ENCODE measurements at regions of chr16 and their contacts with region 1.

Region 1: DNA sequence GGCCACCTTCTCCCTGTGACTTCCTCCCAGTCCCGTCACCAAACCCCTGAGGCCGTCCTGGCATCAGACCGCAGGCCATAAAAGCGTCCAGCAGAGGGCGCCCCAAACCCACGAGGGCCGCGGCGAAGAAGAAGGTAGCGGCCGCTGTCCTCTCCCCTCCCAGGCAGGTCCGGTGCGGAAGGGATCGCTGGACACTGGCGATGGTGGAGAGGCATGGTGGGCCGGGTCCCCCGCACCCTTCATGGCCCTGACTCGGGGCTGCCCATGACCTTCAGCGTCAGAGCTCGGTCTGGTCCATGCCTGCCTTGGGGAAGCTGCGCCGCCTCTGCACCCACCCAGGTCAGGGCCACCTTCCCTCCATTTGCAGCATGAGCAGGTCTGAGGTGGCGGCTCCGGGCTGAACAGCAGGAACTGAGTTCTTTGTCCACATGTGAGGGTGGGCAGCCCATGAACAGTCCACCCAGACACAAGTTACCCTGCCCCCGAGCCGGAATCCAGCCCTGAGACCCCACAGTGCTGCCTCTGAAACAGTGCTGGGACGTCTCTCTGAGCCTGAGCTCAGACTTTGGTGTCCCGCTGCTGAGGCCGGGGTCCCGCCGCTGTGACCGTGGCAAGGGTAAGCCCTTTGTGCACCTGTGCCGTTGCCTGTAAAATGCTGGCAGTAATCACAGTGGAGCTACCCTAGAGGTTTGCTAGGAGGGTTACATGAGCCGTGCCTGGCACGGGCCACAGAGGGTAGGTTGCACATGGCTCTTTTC is 40.8 kb upstream of the CMIP start:
- DNase-seq: peak; percentile 89
- ATAC-seq: peak; percentile 95
- H3K4me3 ChIP-seq: peak overlapping the region in 4 of 5 experiments; percentile 16 to 45 (median 35)
- H3K4me3 Mint-ChIP-seq: peak overlapping the region; percentile 40
- H3K27ac ChIP-seq: no peak overlapping the region
- H3K27ac Mint-ChIP-seq: no peak overlapping the region
- H3K4me1 ChIP-seq: peaks cover 0 to 9% of the 10 kb centered on the region in 2 donors
- H3K4me1 Mint-ChIP-seq: peaks cover 4% of the 10 kb centered on the region
- H3K27me3 ChIP-seq: peaks cover 0 to 7% (median 0%) of the 10 kb centered on the region in 4 experiments
- H3K27me3 Mint-ChIP-seq: peaks cover 4% of the 10 kb centered on the region
- CTCF ChIP-seq: peak; percentile 97

Region 2: DNA sequence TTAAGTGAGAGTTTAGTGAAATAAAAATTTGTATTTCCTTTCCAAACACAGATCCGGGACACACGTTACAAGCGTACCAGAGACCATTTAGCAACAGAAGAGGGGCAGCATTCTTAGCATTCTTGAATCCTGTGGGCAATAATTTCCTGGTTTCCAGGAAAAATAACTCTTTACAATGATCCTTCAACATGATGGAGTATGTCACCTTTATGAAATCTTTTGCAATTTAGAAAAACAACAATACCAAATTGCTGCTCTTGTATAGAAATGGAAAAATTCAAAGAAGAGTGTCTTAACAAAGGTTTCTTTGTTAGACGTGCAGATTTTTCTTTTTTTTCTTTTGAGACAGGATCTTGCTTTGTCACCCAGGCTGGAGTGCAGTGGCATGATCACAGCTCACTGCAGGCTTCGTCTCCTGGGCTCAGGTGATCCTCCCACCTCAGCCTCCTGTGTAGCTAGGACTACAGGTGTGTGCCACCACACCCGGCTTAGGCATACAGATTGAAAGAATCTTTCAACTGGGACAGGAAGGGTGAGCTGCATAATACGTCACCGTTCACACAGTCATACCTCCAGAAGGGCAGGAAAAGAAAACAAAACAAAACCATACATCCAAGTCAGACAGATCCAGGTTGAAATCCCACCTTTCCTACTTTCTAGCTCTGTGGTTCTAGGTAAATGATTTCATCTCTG is 296.8 kb before region 1 on chr16:
- CTCF ChIA-PET with region 1: no interaction called
- POLR2A ChIA-PET with region 1: no interaction called
- intact Hi-C with region 1: no loop called
- DNase-seq: no peak
- ATAC-seq: no peak
- H3K4me3 ChIP-seq: no peak overlapping the region
- H3K4me3 Mint-ChIP-seq: no peak overlapping the region
- H3K27ac ChIP-seq: no peak overlapping the region
- H3K27ac Mint-ChIP-seq: no peak overlapping the region
- H3K4me1 ChIP-seq: no peaks in the 10 kb centered on the region
- H3K4me1 Mint-ChIP-seq: no peaks in the 10 kb centered on the region
- H3K27me3 ChIP-seq: peaks cover 0 to 3% (median 0%) of the 10 kb centered on the region in 4 experiments
- H3K27me3 Mint-ChIP-seq: peaks cover 12% of the 10 kb centered on the region
- CTCF ChIP-seq: no peak

Region 3: GRCh38 chr16:81189100-81189664 is 214.6 kb before region 1 on chr16:
- CTCF ChIA-PET with region 1: no interaction called
- POLR2A ChIA-PET with region 1: no interaction called
- intact Hi-C with region 1: no loop called
- DNase-seq: no peak
- ATAC-seq: no peak
- H3K4me3 ChIP-seq: no peak overlapping the region
- H3K4me3 Mint-ChIP-seq: no peak overlapping the region
- H3K27ac ChIP-seq: no peak overlapping the region
- H3K27ac Mint-ChIP-seq: no peak overlapping the region
- H3K4me1 ChIP-seq: no peaks in the 10 kb centered on the region
- H3K4me1 Mint-ChIP-seq: no peaks in the 10 kb centered on the region
- H3K27me3 ChIP-seq: no peaks in the 10 kb centered on the region
- H3K27me3 Mint-ChIP-seq: peaks cover 3% of the 10 kb centered on the region
- CTCF ChIP-seq: no peak

Region 4: DNA sequence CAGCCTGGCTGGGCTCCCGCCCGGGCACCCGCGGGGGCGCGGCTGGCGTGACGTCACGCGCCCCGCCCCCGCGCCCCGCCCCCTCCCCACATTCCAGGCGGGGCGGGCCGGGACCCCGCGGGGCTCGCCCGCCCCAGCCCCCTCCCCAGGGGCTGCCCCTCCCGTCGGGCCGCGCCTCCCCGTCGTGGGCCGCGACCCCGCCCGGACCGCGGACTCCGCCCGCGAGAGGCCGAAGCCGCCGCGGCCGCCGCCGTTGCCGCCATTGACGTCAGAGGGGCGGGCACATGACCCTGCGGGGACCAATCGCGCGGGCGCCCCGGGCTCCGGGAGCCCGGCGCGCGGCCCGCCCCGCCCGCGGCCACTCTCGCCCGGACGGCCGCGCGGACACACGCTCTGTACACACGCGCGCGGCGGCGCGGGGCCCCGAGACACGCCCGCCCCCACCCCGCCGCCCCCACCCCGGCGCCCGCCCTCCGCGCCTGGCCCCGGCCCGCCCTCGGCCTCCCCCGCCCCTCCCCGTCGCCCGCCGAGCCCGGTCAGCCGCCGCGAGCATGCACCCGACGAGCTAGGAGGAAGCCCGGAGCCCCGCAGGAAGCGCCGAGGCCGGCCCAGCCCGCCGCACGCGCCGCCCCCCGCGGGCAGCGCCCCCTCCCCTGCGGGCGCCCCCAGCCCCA is 40.8 kb after region 1 on chr16 and contains the start of gene CMIP:
- CTCF ChIA-PET with region 1: interaction called, 5 read pairs
- POLR2A ChIA-PET with region 1: no interaction called
- intact Hi-C with region 1: loop called (anchors 5 kb)
- DNase-seq: peak; percentile 91
- ATAC-seq: peak; percentile 85
- H3K4me3 ChIP-seq: peak within 1 kb of the TSS; percentile 68 to 90 (median 80)
- H3K4me3 Mint-ChIP-seq: peak within 1 kb of the TSS; percentile 91
- H3K27ac ChIP-seq: peak within 1 kb of the TSS; percentile 57 to 77
- H3K27ac Mint-ChIP-seq: peak within 1 kb of the TSS; percentile 91
- H3K4me1 ChIP-seq: peaks cover 36 to 47% of the 10 kb centered on the region in 2 donors
- H3K4me1 Mint-ChIP-seq: peaks cover 43% of the 10 kb centered on the region
- H3K27me3 ChIP-seq: no peaks in the 10 kb centered on the region
- H3K27me3 Mint-ChIP-seq: no peaks in the 10 kb centered on the region
- CTCF ChIP-seq: no peak
- total RNA-seq, gene CMIP: 155 and 168 TPM in 2 replicates

Region 5: DNA sequence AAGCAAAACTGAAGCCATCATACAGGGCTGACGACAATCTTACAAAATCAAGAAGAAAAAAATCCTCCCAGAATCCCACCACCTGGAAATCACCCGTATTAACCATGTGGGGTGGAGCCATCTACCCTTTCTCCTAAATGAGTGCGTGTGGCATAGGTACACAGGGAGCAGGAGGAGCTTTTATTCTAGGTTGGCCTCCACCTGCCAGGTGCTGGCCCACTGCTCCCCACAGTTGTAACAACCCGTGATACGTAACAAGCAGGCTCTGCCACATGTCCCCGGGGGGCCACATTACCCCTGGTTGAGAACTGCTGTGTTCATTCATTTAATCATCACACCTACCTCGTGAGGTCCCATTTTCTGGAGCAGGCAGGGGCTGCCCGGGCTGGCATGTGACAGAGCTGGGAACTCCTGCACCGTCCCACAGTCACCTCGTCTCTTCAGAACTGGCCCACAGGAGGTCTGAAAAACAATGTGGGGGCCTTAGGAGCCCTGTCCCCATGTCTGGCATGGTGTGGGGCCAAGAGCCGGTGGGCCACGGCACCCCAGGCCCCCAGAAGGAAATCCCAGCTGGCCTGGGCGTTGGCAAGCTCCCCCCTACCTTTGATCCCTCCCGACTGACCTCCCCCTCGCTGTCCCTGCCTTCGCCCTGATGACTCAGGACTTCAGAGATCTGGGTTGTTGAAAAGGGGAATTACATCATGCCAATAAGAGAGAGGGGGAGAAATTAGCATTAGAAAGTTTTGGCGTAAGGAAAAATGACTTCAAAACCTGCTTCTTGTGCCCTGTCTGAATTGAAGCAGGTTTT is 53.7 kb after region 1 on chr16:
- CTCF ChIA-PET with region 1: no interaction called
- POLR2A ChIA-PET with region 1: no interaction called
- intact Hi-C with region 1: no loop called
- DNase-seq: no peak
- ATAC-seq: peak; percentile 51
- H3K4me3 ChIP-seq: no peak overlapping the region
- H3K4me3 Mint-ChIP-seq: no peak overlapping the region
- H3K27ac ChIP-seq: peak overlapping the region in 1 of 2 donors; percentile 12
- H3K27ac Mint-ChIP-seq: peak overlapping the region; percentile 41
- H3K4me1 ChIP-seq: peaks cover 6 to 22% of the 10 kb centered on the region in 2 donors
- H3K4me1 Mint-ChIP-seq: peaks cover 68% of the 10 kb centered on the region
- H3K27me3 ChIP-seq: no peaks in the 10 kb centered on the region
- H3K27me3 Mint-ChIP-seq: no peaks in the 10 kb centered on the region
- CTCF ChIP-seq: no peak

Region 6: GRCh38 chr16:81497690-81498089 is 93.9 kb after region 1 on chr16:
- CTCF ChIA-PET with region 1: interaction called, 11 read pairs
- POLR2A ChIA-PET with region 1: no interaction called
- intact Hi-C with region 1: loop called (anchors 5 kb)
- DNase-seq: peak; percentile 72
- ATAC-seq: no peak
- H3K4me3 ChIP-seq: peak overlapping the region in 1 of 5 experiments; percentile 3
- H3K4me3 Mint-ChIP-seq: peak overlapping the region; percentile 29
- H3K27ac ChIP-seq: no peak overlapping the region
- H3K27ac Mint-ChIP-seq: peak overlapping the region; percentile 6
- H3K4me1 ChIP-seq: peaks cover 63 to 79% of the 10 kb centered on the region in 2 donors
- H3K4me1 Mint-ChIP-seq: peaks cover 86% of the 10 kb centered on the region
- H3K27me3 ChIP-seq: no peaks in the 10 kb centered on the region
- H3K27me3 Mint-ChIP-seq: no peaks in the 10 kb centered on the region
- CTCF ChIP-seq: peak; percentile 31

Region 7: GRCh38 chr16:81558444-81559175 is 154.8 kb after region 1 on chr16:
- CTCF ChIA-PET with region 1: no interaction called
- POLR2A ChIA-PET with region 1: interaction called, 12 read pairs
- intact Hi-C with region 1: no loop called
- DNase-seq: peak; percentile 20
- ATAC-seq: no peak
- H3K4me3 ChIP-seq: no peak overlapping the region
- H3K4me3 Mint-ChIP-seq: no peak overlapping the region
- H3K27ac ChIP-seq: no peak overlapping the region
- H3K27ac Mint-ChIP-seq: no peak overlapping the region
- H3K4me1 ChIP-seq: peaks cover 7 to 9% of the 10 kb centered on the region in 2 donors
- H3K4me1 Mint-ChIP-seq: peaks cover 51% of the 10 kb centered on the region
- H3K27me3 ChIP-seq: no peaks in the 10 kb centered on the region
- H3K27me3 Mint-ChIP-seq: no peaks in the 10 kb centered on the region
- CTCF ChIP-seq: no peak

Region 8: DNA sequence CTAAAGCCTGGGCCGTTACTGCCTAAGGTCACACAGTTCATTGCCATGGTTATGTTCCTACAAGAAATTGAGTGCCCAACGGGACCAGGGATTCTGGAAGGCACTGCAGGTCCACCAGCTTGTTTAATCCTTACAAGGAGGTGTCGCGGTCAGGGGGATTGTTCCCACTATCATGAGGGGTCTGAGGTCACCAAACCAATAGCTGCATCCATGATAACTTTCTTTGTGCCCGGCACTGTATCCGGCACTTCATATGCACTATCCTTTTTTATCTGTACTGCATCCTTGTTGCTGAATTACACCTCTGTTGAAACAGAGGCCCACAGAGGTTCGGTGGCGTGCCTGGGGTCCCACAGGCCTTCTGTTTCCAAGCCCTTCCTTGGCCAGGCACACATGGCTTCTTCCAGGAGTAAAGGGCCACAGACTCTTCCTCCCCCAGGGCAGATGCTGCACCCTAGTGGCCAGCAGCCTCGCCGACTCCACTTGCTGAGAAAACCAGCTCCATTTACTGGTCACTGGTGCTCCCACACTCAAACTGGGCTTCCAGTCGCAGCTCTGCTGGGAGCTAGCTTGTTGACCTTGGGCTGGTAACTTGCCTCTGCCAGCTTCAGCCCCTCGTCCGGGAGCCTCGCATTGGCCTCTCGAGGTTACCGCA is 293.3 kb after region 1 on chr16:
- CTCF ChIA-PET with region 1: interaction called, 33 read pairs
- POLR2A ChIA-PET with region 1: no interaction called
- intact Hi-C with region 1: loop called (anchors 1 kb)
- DNase-seq: peak; percentile 30
- ATAC-seq: no peak
- H3K4me3 ChIP-seq: no peak overlapping the region
- H3K4me3 Mint-ChIP-seq: no peak overlapping the region
- H3K27ac ChIP-seq: no peak overlapping the region
- H3K27ac Mint-ChIP-seq: no peak overlapping the region
- H3K4me1 ChIP-seq: no peaks in the 10 kb centered on the region
- H3K4me1 Mint-ChIP-seq: no peaks in the 10 kb centered on the region
- H3K27me3 ChIP-seq: no peaks in the 10 kb centered on the region
- H3K27me3 Mint-ChIP-seq: no peaks in the 10 kb centered on the region
- CTCF ChIP-seq: peak; percentile 40

Region 9: GRCh38 chr16:81723098-81723723 is 319.4 kb after region 1 on chr16:
- CTCF ChIA-PET with region 1: interaction called, 28 read pairs
- POLR2A ChIA-PET with region 1: no interaction called
- intact Hi-C with region 1: loop called (anchors 1 kb)
- DNase-seq: peak; percentile 84
- ATAC-seq: peak; percentile 87
- H3K4me3 ChIP-seq: no peak overlapping the region
- H3K4me3 Mint-ChIP-seq: no peak overlapping the region
- H3K27ac ChIP-seq: no peak overlapping the region
- H3K27ac Mint-ChIP-seq: peak overlapping the region; percentile 57
- H3K4me1 ChIP-seq: peaks cover 7 to 24% of the 10 kb centered on the region in 2 donors
- H3K4me1 Mint-ChIP-seq: peaks cover 11% of the 10 kb centered on the region
- H3K27me3 ChIP-seq: no peaks in the 10 kb centered on the region
- H3K27me3 Mint-ChIP-seq: no peaks in the 10 kb centered on the region
- CTCF ChIP-seq: peak; percentile 88